ENCODE measurements at regions of chr5 and their contacts with region 1.

Region 1: GRCh38 chr5:135457424-135458071 is 5.4 kb upstream of the TIFAB start:
- DNase-seq: peak; percentile 78
- ATAC-seq: peak; percentile 60
- H3K4me3 Mint-ChIP-seq: no peak overlapping the region
- H3K27ac Mint-ChIP-seq: no peak overlapping the region
- H3K4me1 Mint-ChIP-seq: peaks cover 2% of the 10 kb centered on the region
- H3K27me3 Mint-ChIP-seq: peaks cover 6% of the 10 kb centered on the region
- CTCF ChIP-seq: peak; percentile 73

Region 2: DNA sequence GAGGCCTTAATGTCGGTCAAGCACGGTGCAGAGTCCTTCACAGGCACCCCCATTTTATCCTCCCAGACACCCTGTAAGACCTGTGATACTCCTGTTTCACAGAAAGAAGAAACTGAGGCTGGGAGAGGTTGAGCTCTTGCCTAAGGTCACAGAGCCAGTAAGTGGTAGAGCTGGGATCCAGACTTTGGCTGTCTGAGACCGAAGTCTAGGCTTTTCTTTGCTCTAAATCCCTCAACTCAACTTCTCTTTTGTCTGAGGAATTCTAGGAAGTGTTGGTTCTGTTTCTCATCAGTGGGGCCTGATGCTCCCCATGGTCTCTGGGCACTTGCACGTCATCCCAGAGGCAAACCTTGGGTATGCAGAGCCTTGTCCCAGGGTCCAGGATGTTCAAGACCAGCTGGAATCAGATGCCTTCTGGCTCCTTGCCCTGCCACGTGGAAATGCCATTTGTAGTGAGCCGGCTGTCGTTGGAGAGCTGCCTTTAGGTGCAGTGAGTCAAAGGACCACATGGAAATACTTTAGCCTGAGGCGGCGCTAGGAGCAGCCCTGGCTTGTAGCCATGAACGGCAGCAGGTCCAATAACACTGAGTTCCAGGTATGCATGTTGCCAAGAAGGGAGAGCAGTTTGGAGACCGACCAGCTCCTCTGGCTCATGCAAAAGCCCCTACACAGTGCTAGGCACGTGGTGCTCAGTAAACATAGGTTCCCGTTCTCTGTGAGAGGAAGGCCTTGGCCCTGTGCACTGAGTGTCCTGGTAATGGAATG is 19.6 kb before region 1 on chr5:
- CTCF ChIA-PET with region 1: interaction called, 11 read pairs
- POLR2A ChIA-PET with region 1: no interaction called
- intact Hi-C with region 1: no loop called
- DNase-seq: no peak
- ATAC-seq: no peak
- H3K4me3 Mint-ChIP-seq: no peak overlapping the region
- H3K27ac Mint-ChIP-seq: no peak overlapping the region
- H3K4me1 Mint-ChIP-seq: no peaks in the 10 kb centered on the region
- H3K27me3 Mint-ChIP-seq: peaks cover 8% of the 10 kb centered on the region
- CTCF ChIP-seq: no peak